ENCODE measurements at regions of chr7 and their contacts with region 1.

Region 1: GRCh38 chr7:6026011-6026819 is 5.0 kb upstream of the ANKRD61 start:
- DNase-seq: peak; percentile 91
- ATAC-seq: peak; percentile 83

Region 2: GRCh38 chr7:6056616-6057015 is 30.4 kb after region 1 on chr7:
- intact Hi-C with region 1: loop called (anchors 1 kb)
- DNase-seq: no peak
- ATAC-seq: no peak

Measured in Right ventricle myocardium inferior (tissue), 1 donor.